Activated CD8-positive, alpha-beta memory T cell treated with anti-CD3 and anti-CD28 coated beads, Interleukin-2, amount 10 ng/mL, durations not matched to agents 7 days and 5 days (primary cell): ENCODE measurements at regions of chr20 and their contacts with region 1.

Region 1: DNA sequence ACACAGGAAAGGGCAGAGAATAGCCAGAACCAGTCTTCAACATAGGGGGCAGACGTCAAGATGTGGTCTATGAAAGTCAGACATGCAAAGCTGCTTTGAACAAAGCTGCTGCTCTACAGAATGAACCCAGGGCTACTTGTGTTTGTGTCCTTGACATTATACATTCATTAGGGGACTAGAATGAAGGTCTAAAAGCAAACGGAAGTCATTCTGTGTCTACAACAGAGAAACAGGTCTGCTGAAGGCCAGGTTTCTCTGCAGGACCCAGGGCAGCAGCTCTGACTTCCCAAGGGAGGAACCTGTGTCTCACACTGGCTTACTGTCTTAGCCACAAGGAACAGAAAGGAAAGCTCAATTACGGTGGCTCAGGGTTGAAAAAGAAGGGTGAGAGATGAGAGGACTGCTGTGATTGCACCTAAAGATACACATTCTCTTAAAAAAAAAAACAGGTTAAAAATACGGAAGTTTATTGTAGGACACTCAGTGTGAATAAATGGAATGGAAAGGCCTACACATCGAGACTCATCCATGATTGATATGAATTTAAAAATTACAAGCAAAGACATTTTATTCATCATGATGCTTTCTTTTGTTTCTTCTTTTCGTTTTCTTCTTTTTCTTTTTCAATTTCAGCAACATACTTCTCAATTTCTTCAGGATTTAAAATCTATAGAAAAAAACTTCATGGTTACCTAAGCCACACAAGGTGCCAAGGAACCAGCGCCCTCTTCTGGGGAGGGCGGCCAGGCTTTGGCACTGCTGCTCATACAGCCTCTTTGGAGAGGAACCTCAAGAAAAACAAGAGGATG is 6.7 kb downstream of the PSMA7 start:
- DNase-seq: peak; percentile 76
- ATAC-seq: peak; percentile 63
- H3K4me3 Mint-ChIP-seq: no peak overlapping the region
- H3K27ac Mint-ChIP-seq: peak overlapping the region; percentile 31
- H3K4me1 Mint-ChIP-seq: peaks cover 42% of the 10 kb centered on the region
- H3K27me3 Mint-ChIP-seq: no peaks in the 10 kb centered on the region

Region 2: GRCh38 chr20:61719691-61720347 is 416.7 kb before region 1 on chr20:
- CTCF ChIA-PET with region 1: no interaction called
- DNase-seq: peak; percentile 73
- ATAC-seq: peak; percentile 77
- H3K4me3 Mint-ChIP-seq: peak overlapping the region; percentile 72
- H3K27ac Mint-ChIP-seq: peak overlapping the region; percentile 85
- H3K4me1 Mint-ChIP-seq: peaks cover 17% of the 10 kb centered on the region
- H3K27me3 Mint-ChIP-seq: no peaks in the 10 kb centered on the region

Region 3: GRCh38 chr20:62010551-62011402 is 125.7 kb before region 1 on chr20:
- CTCF ChIA-PET with region 1: interaction called, 30 read pairs
- DNase-seq: peak; percentile 66
- ATAC-seq: peak; percentile 75
- H3K4me3 Mint-ChIP-seq: no peak overlapping the region
- H3K27ac Mint-ChIP-seq: peak overlapping the region; percentile 16
- H3K4me1 Mint-ChIP-seq: peaks cover 5% of the 10 kb centered on the region
- H3K27me3 Mint-ChIP-seq: no peaks in the 10 kb centered on the region

Region 4: DNA sequence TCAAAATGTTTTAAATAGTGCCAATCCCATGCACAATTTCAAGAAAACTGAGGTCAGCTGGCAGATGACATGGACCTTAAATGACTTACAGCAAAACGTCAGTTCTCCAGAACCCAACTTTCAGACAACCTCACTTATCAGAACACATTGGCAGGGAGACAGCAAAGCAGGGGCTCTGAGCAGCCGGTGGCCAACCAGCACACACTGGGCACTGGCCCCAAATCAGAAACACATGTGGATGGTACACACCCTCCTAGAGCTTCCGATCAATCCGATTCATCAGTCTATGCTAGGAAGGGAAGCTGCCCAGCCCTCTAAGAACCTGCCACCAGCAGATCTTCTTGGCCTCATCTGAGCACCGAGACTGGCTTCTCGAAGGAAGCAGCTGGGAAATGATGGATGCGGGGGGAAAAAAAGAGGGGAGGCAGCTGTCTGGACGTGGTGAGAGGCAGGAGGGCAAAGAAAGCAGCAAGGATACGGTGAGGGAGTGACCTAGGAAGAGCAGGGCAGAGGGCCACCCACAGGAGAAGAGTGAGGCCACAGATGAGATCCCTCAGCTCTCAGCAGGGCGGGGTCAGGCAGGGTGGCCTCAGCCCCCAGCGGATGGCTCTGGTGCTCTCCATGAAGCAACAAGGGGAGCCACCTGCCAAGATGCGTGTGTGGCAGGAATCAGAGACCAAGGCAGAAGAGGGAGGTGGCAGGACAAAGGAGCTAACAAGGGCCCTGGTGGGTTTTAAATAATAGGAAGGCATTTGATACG is 103.7 kb before region 1 on chr20:
- CTCF ChIA-PET with region 1: no interaction called
- DNase-seq: no peak
- ATAC-seq: no peak
- H3K4me3 Mint-ChIP-seq: no peak overlapping the region
- H3K27ac Mint-ChIP-seq: no peak overlapping the region
- H3K4me1 Mint-ChIP-seq: peaks cover 29% of the 10 kb centered on the region
- H3K27me3 Mint-ChIP-seq: no peaks in the 10 kb centered on the region

Region 5: DNA sequence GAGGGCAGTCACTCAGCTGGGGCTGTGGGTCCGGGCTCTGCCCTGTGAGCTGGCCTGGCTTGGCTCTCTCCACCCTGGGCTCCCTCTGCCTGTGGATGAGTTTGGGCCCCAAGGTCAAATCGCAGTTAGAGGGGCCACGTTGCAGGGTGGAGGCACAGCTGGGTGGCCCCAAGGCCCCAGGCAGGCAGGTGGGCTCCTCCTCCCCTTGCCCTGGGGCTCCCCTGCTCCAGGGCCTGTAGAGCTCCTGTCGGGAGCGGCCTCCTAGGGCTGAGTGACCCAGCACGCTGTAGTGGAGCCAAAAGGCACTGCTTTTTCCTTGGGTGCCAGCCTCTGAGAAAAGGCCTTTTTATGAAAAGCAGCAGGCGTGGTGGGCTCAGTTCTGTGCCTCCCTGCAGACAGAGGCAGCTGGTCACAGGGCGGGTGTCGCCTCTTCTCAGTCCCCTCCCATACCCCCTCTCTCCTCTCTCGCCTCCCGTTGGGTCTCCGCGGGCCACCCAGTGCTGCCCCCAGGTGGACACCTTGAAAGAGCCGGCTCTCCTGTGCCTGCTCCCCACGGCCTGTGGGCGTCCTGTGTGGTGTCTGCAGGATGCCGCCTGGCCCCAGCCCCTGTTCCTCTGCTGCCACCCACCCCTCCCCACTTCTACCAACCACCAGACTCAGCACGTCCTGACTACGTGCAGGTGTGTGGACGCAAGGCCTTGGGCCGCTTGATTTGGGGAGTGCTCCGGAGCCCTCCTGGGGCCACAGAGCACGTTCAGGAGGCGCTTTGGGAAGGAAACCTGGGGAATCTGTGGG is 20.3 kb after region 1 on chr20:
- CTCF ChIA-PET with region 1: no interaction called
- DNase-seq: peak; percentile 77
- ATAC-seq: peak; percentile 81
- H3K4me3 Mint-ChIP-seq: no peak overlapping the region
- H3K27ac Mint-ChIP-seq: no peak overlapping the region
- H3K4me1 Mint-ChIP-seq: peaks cover 18% of the 10 kb centered on the region
- H3K27me3 Mint-ChIP-seq: no peaks in the 10 kb centered on the region

Region 6: DNA sequence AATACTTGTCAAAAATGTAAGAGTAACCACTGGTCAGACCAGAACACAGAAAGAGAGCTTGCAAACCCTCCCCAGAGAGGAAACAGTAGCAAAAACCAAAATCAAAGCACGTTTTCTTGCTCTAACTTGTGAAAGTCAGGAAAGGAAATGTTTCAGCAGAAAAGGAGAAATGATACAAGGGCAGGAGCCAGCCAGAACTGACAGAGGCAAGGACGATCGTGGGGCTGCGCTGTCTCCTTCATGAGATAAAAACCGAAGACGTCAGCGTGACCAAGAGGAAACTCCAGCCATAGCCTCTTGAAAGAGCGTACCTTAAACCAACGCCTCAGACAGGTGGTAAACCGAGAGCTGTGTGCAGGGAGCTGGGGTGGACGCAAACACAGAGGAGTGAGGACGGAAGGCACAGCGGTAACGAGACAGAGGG is 203.2 kb after region 1 on chr20:
- CTCF ChIA-PET with region 1: no interaction called
- DNase-seq: no peak
- ATAC-seq: no peak
- H3K4me3 Mint-ChIP-seq: no peak overlapping the region
- H3K27ac Mint-ChIP-seq: no peak overlapping the region
- H3K4me1 Mint-ChIP-seq: no peaks in the 10 kb centered on the region
- H3K27me3 Mint-ChIP-seq: peaks cover 11% of the 10 kb centered on the region